ENCODE measurements at regions of chr2 and their contacts with region 1.

Region 1: GRCh38 chr2:97774425-97774824 is 61.0 kb downstream of the ZAP70 start:
- DNase-seq: peak; percentile 19
- H3K4me3 Mint-ChIP-seq: no peak overlapping the region
- H3K27ac Mint-ChIP-seq: no peak overlapping the region
- H3K4me1 Mint-ChIP-seq: no peaks in the 10 kb centered on the region
- H3K27me3 Mint-ChIP-seq: no peaks in the 10 kb centered on the region
- CTCF ChIP-seq: peak; percentile 28

Region 2: GRCh38 chr2:97751752-97752151 is 22.7 kb before region 1 on chr2:
- CTCF ChIA-PET with region 1: interaction called, 10 read pairs
- POLR2A ChIA-PET with region 1: no interaction called
- intact Hi-C with region 1: no loop called
- DNase-seq: peak; percentile 53
- H3K4me3 Mint-ChIP-seq: no peak overlapping the region
- H3K27ac Mint-ChIP-seq: peak overlapping the region; percentile 30
- H3K4me1 Mint-ChIP-seq: peaks cover 17% of the 10 kb centered on the region
- H3K27me3 Mint-ChIP-seq: no peaks in the 10 kb centered on the region
- CTCF ChIP-seq: no peak